ENCODE measurements at regions of chr15 and their contacts with region 1.

Region 1: DNA sequence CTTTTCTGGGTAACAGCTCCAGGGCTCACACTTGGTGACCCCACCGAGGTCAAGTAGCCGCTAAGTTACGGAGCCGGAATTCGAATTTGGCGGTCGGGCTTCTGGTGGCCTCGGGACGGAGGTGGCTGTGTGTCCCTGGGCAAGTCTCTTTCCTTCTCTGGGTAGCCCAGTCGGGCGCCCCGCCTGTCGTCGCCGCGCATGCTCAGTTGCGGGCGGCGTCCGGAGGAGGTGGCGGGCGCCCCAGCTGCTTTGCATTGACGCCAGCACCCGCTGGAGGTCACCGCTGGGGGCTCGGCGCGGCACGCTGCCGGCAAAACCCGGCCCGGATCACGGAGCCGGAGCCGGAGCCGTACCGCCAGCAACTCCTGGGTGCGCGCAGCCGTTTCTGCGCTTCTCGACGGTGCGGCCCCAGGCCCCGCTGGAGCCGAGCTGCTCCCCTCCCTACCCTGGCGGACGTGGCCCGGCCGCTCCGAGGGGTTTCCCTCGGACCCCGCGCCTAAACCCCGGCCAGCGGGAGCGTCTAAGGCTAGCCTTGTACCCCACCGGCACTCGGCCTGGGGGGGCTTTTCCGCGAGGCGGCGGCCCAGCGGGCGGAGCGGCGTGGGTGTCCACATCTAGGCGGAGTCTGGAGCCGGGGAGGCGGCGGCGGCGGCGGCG is 474 bp upstream of the PDE8A start:
- DNase-seq: peak; percentile 97
- H3K4me3 ChIP-seq: peak overlapping the region; percentile 63 to 91 (median 86)
- H3K27ac ChIP-seq: peak overlapping the region; percentile 90
- H3K4me1 ChIP-seq: peaks cover 16% of the 10 kb centered on the region
- H3K27me3 ChIP-seq: no peaks in the 10 kb centered on the region
- CTCF ChIP-seq: peak in 1 of 2 donors; percentile 40
- POLR2A ChIP-seq: no peak

Region 2: DNA sequence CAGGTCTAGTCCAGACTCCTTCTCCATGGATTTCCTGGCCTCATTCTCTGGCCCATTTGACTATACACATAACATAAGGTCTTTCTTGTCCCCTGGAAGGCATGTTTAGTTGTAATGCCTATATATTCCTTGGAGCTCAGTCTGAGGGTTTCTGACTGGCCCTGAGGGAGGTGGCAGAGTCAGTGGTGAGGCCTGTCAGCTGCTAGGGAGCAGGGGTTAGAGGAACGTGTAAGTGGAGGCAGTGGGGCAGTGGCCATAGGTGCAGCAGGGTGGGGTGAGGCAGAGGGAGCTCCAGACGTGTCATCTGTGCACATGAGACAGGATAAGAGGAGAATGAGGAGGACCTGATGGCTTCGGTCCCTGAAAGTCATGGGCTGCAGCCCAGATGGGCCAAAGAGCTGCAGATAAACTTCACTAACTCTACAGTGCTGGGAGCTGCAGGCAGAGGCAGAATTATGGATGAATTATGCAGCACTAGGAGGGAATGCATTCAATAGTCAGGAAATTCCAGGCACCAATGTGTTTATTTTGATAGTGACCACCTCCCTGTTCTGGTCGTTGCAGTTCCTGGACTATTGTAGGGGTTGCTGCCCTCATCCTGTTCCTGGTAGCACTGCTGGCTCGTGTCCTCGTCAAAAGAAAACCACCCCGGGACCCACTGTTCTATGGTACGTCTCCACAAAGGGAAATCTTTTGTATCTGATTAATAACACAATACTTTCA is 1868.8 kb before region 1 on chr15:
- CTCF ChIA-PET with region 1: no interaction called
- POLR2A ChIA-PET with region 1: no interaction called
- dilution Hi-C with region 1: no loop called
- intact Hi-C with region 1: no loop called
- DNase-seq: peak; percentile 96
- H3K4me3 ChIP-seq: no peak overlapping the region
- H3K27ac ChIP-seq: peak overlapping the region; percentile 60
- H3K4me1 ChIP-seq: peaks cover 61% of the 10 kb centered on the region
- H3K27me3 ChIP-seq: no peaks in the 10 kb centered on the region
- CTCF ChIP-seq: peak; percentile 16 to 23
- POLR2A ChIP-seq: peak; percentile 85

Region 3: DNA sequence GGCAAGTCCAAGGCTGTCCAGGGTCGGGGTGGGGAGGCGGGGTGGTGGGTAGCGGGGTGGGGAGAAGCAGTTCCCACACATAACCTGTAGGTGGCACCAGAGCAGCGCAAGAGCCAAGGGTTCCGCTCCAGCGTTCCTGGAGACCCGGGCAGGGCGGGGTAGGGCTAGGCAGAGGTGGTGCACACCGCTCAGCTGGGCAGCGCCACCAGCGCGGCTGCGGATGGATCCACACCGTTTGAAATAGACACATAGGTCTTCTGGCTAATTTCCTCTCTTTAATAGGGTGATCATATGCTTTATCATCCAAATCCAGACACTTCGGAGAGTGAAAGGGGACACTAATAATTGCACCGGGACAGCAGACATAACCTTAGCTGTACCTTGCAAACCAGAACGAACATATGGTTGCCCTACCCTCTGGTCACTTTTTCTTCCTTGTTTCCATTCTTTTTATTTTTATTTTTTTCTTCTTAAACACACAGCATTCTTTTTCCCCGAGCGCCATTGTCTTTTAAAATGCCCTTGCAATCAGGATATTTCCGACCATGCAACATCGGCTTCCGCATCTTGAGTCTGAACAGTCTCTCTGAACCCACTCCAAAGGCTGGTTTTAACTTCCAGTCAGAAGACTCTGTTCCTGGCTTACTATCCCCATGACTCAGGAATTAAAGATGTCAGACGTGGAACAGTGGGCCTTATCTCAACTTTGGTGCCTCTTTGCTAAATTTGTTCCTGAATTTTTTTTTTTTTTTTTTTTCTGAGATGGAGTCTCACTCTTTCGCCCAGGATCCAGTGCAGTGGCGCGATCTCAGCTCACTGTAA is 392.9 kb before region 1 on chr15:
- CTCF ChIA-PET with region 1: no interaction called
- POLR2A ChIA-PET with region 1: no interaction called
- dilution Hi-C with region 1: no loop called
- intact Hi-C with region 1: loop called (anchors 2 kb)
- DNase-seq: peak; percentile 72
- H3K4me3 ChIP-seq: peak overlapping the region in 2 of 3 experiments; percentile 24 to 58
- H3K27ac ChIP-seq: no peak overlapping the region
- H3K4me1 ChIP-seq: peaks cover 5% of the 10 kb centered on the region
- H3K27me3 ChIP-seq: peaks cover 0 to 4% of the 10 kb centered on the region in 2 experiments
- CTCF ChIP-seq: peak; percentile 43 to 82
- POLR2A ChIP-seq: no peak

Region 4: DNA sequence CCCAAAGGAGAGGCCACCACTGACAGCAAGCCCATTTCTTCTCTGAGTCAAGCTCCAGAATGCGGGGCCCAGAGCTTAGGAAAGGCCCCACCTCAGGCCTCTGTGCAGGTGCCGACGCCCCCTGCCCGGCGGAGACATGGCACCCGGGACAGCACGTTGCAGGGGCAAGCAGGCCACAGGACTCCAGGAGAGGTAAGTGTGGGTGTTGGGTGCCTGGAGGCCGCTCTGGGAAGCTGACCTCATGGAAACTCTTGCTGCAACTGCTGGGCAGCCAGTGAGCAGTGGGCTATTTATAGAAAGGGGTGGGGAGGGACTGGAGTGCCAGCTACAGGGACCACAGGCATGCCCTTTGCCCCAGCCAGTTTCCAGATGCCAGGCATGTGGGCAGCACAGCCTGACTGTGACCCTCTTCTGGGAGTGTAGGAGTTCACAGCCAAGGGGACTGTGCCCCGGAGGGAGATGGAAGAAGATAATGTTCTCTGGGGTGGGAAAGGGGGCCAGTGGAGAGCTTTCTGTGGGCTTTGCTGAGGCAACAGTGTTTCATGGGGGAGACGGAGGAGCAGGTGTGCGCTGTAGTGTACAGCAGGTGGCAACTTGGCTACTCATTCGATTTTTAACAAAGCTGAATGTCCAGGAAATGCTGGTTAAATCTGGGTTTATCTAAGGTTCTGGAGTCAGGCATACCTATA is 140.3 kb before region 1 on chr15:
- CTCF ChIA-PET with region 1: no interaction called
- POLR2A ChIA-PET with region 1: no interaction called
- dilution Hi-C with region 1: no loop called
- intact Hi-C with region 1: no loop called
- DNase-seq: peak; percentile 28
- H3K4me3 ChIP-seq: no peak overlapping the region
- H3K27ac ChIP-seq: no peak overlapping the region
- H3K4me1 ChIP-seq: no peaks in the 10 kb centered on the region
- H3K27me3 ChIP-seq: no peaks in the 10 kb centered on the region
- CTCF ChIP-seq: no peak
- POLR2A ChIP-seq: no peak

Region 5: DNA sequence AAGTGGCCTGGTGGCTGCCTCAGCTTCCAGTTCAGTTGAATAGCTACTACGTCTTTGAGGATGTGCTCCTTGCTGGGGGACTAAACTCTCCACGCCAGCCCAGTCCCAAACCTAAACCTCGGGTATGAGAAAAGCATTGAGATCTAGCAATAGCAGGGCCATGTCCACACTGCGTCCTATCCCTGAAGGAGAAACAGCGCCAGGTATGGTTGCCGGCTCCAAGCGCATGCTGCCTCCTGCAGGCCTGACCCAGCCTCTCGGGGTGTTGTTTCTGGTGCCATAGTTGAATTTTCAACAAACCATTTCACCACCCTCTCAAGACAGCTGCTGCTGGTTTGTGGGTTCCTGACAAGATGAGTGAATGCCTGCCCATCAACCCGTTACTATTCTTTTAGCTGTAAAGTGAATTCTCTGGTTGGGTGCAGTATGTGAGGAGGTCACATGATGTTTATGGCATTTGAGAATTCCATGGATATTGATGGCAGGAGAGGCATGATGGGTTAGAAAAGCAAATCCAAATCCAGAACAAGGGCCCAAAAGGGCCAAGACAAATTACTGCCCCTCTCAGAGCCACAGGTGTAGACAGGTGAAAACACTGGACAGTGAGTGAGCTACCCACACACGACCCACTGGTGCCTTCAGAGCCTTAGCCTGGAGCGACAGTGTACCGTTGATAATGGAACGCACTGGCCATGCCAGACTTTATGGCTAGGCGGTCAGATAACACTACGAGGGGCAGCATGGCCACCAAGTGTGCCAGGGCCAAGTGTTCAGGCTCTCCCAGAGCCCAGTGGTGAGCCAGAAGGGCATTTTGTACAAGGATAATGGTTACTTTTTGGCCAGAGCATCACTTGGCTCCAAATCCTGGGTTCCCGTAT is 109.5 kb before region 1 on chr15:
- CTCF ChIA-PET with region 1: no interaction called
- POLR2A ChIA-PET with region 1: no interaction called
- dilution Hi-C with region 1: no loop called
- intact Hi-C with region 1: no loop called
- DNase-seq: no peak
- H3K4me3 ChIP-seq: no peak overlapping the region
- H3K27ac ChIP-seq: no peak overlapping the region
- H3K4me1 ChIP-seq: no peaks in the 10 kb centered on the region
- H3K27me3 ChIP-seq: no peaks in the 10 kb centered on the region
- CTCF ChIP-seq: no peak
- POLR2A ChIP-seq: no peak

Region 6: GRCh38 chr15:84911879-84912660 is 69.1 kb before region 1 on chr15:
- CTCF ChIA-PET with region 1: no interaction called
- POLR2A ChIA-PET with region 1: interaction called, 3 read pairs
- dilution Hi-C with region 1: no loop called
- intact Hi-C with region 1: loop called (anchors 1 kb)
- DNase-seq: peak; percentile 99
- H3K4me3 ChIP-seq: no peak overlapping the region
- H3K27ac ChIP-seq: peak overlapping the region; percentile 99
- H3K4me1 ChIP-seq: peaks cover 34% of the 10 kb centered on the region
- H3K27me3 ChIP-seq: no peaks in the 10 kb centered on the region
- CTCF ChIP-seq: no peak
- POLR2A ChIP-seq: peak; percentile 66

Region 7: GRCh38 chr15:84955089-84955848 is 25.9 kb before region 1 on chr15:
- CTCF ChIA-PET with region 1: interaction called, 21 read pairs
- POLR2A ChIA-PET with region 1: interaction called, 3 read pairs
- dilution Hi-C with region 1: no loop called
- intact Hi-C with region 1: loop called (anchors 1 kb)
- DNase-seq: peak; percentile 84
- H3K4me3 ChIP-seq: no peak overlapping the region
- H3K27ac ChIP-seq: no peak overlapping the region
- H3K4me1 ChIP-seq: peaks cover 24% of the 10 kb centered on the region
- H3K27me3 ChIP-seq: no peaks in the 10 kb centered on the region
- CTCF ChIP-seq: peak; percentile 80 to 91
- POLR2A ChIP-seq: no peak

Region 8: DNA sequence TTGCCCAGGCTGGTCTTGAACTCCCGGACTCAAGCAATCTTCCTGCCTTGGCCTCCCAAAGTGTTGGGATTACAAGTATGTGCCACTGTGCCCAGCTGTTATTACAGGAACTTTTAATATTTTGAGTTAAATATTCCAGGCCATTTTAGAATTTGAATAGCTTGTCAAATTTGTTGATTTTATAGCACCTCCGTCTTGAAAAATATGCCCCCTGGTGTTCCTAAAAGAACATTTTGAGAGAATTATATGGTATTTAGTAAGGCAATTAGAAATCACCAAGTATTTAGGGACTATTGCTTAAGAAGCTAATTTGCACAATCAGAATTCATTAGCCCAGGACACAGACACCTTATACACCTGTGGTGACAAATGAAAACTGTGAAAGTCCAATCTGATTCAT is 24.1 kb after region 1 on chr15:
- CTCF ChIA-PET with region 1: interaction called, 19 read pairs
- POLR2A ChIA-PET with region 1: no interaction called
- dilution Hi-C with region 1: no loop called
- intact Hi-C with region 1: no loop called
- DNase-seq: no peak
- H3K4me3 ChIP-seq: no peak overlapping the region
- H3K27ac ChIP-seq: no peak overlapping the region
- H3K4me1 ChIP-seq: peaks cover 11% of the 10 kb centered on the region
- H3K27me3 ChIP-seq: no peaks in the 10 kb centered on the region
- CTCF ChIP-seq: peak in 1 of 2 donors; percentile 4
- POLR2A ChIP-seq: no peak

Region 9: DNA sequence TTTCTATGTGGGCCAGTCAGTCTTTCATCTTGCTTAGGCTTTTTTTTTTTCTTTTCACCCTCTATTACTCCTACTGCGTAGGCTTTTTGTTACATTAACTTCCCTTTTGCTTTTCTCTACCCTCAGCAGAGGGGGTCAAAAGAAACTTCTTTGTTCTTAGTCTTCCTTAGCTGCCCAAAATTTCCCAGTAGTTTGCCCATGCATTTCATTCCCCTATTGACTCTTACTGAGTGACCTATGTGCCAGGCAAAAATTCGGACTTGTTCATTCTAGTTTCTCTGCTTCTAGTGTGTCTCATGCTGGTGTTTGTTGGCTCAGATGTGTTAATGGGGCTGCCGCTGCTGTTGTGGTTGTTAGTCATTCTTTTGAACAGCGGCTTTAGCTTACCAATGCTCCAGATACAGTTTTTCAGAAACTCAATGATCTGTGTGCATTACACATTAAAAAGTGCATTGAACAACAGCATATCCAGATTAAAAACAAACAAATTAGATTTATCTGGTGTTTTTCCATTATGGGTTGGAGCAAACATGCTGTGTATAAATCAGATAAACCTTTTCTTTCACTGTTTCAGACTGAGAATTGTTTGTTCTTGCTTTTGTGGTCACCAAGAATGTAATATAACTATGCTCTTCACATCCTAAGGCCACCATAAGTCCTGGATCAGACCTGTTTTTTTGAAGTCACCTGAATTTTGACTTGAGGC is 43.5 kb after region 1 on chr15:
- CTCF ChIA-PET with region 1: interaction called, 6 read pairs
- POLR2A ChIA-PET with region 1: no interaction called
- dilution Hi-C with region 1: no loop called
- intact Hi-C with region 1: loop called (anchors 5 kb)
- DNase-seq: no peak
- H3K4me3 ChIP-seq: no peak overlapping the region
- H3K27ac ChIP-seq: no peak overlapping the region
- H3K4me1 ChIP-seq: peaks cover 20% of the 10 kb centered on the region
- H3K27me3 ChIP-seq: no peaks in the 10 kb centered on the region
- CTCF ChIP-seq: no peak
- POLR2A ChIP-seq: no peak

Region 10: DNA sequence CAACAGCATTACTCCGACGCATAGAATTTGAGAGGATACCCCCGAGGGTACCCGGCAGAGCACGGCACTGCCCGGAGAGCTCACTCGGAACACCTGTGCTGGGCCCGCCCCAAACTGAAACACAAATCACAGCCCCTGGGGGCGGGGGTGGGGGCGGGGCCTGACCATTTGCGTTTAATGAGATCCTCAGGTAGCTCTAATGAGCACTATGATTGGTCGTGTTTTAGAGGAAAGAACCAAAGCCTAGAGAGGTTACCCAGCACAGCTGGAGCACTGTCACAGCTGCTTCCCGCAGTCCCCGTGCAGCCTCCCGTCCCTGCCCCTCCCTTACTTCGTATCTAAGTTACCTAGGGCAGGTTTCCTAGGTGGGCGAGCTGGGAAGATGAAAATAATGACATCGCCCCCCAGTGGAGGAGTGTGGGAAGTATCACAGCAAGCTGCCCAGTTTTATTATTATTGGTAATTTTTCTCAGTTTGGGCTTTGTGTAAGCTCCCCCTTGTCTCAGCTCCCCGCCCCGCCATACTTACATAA is 187.5 kb after region 1 on chr15:
- CTCF ChIA-PET with region 1: interaction called, 21 read pairs
- POLR2A ChIA-PET with region 1: no interaction called
- dilution Hi-C with region 1: no loop called
- intact Hi-C with region 1: no loop called
- DNase-seq: peak; percentile 55
- H3K4me3 ChIP-seq: peak overlapping the region in 2 of 3 experiments; percentile 10 to 32
- H3K27ac ChIP-seq: no peak overlapping the region
- H3K4me1 ChIP-seq: no peaks in the 10 kb centered on the region
- H3K27me3 ChIP-seq: no peaks in the 10 kb centered on the region
- CTCF ChIP-seq: peak; percentile 58 to 63
- POLR2A ChIP-seq: no peak

Measured in endothelial cell of umbilical vein (primary cell).